ENCODE measurements at regions of chr17 and their contacts with region 1.

Region 1: GRCh38 chr17:16987830-16988601 is 16.1 kb upstream of the TNFRSF13B start:
- H3K4me3 Mint-ChIP-seq: peak overlapping the region; percentile 39
- H3K27ac Mint-ChIP-seq: peak overlapping the region; percentile 94
- H3K4me1 Mint-ChIP-seq: peaks cover 58% of the 10 kb centered on the region
- H3K27me3 Mint-ChIP-seq: no peaks in the 10 kb centered on the region

Region 2: DNA sequence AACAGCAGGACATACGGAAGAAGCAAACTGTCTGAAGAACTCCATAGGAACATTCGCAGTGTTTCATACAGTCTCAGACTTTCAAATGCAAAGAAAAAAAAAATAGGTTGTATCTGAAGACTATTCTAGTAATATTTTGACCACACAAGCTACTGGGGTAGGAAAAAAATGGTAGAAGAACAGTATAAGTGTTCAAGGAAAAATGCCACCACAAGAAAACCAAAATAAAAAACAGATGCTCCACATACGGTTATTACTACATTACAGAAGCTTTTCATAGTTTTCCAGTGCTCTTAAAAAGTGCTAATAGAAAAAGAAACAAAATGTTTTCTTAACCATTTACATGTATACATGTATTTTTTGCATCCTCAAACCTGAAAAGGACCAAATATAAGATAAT is 776.4 kb before region 1 on chr17:
- intact Hi-C with region 1: no loop called
- H3K4me3 Mint-ChIP-seq: no peak overlapping the region
- H3K27ac Mint-ChIP-seq: no peak overlapping the region
- H3K4me1 Mint-ChIP-seq: peaks cover 36% of the 10 kb centered on the region
- H3K27me3 Mint-ChIP-seq: no peaks in the 10 kb centered on the region

Region 3: GRCh38 chr17:16537130-16537458 is 450.9 kb before region 1 on chr17:
- intact Hi-C with region 1: loop called (anchors 2 kb)
- H3K4me3 Mint-ChIP-seq: peak overlapping the region; percentile 95
- H3K27ac Mint-ChIP-seq: peak overlapping the region; percentile 98
- H3K4me1 Mint-ChIP-seq: peaks cover 13% of the 10 kb centered on the region
- H3K27me3 Mint-ChIP-seq: peaks cover 4% of the 10 kb centered on the region

Region 4: GRCh38 chr17:16922386-16923104 is 65.5 kb before region 1 on chr17:
- intact Hi-C with region 1: loop called (anchors 2 kb)
- H3K4me3 Mint-ChIP-seq: no peak overlapping the region
- H3K27ac Mint-ChIP-seq: no peak overlapping the region
- H3K4me1 Mint-ChIP-seq: no peaks in the 10 kb centered on the region
- H3K27me3 Mint-ChIP-seq: no peaks in the 10 kb centered on the region

Region 5: DNA sequence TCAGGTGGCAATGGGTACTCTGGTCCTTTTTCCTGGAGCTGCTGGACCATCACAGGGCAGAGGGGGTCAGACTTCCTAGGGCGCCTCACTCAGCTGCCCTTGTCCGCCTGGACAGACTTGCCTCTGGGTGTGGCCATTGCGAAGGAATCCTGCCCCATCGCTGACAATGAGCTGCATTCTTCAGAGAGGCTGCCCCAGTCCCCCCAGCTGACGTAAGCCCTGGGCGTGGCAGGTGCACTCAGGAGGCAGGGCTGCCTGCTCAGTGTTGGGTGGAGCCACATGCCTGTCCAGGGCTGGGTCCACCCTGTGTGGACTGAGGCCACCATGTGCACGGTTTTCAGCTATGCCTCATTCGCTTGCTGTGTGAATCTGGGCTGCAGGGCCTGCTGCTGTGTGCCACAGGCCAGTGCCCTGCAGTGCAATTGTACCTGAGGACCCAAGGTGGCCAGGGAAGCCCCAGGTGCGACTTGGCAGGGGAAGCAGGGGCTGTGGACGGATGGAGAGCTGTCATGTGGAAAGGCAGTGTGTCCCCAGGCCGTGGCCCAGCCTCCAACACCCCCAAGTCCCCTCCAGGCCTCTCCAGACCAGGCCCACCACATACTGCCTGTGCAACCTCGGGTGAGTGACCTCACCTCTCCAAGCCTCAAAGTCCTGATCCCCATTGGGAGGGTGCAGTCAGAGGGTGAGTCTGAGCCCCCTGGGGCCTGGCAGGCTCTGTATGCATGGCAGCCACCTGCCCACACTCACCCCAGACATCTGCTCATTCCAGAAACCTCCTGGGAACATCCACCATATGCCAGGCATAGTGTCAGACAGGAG is 40.3 kb after region 1 on chr17:
- intact Hi-C with region 1: no loop called
- H3K4me3 Mint-ChIP-seq: no peak overlapping the region
- H3K27ac Mint-ChIP-seq: no peak overlapping the region
- H3K4me1 Mint-ChIP-seq: peaks cover 6% of the 10 kb centered on the region
- H3K27me3 Mint-ChIP-seq: peaks cover 40% of the 10 kb centered on the region

Measured in dendritic cell treated with granulocyte-macrophage colony-stimulating factor and Interleukin-4, amounts not matched to agents 40 ng/mL and 50 ng/mL, for 4 days (primary cell).